ENCODE measurements at regions of chr4 and their contacts with region 1.

Region 1: DNA sequence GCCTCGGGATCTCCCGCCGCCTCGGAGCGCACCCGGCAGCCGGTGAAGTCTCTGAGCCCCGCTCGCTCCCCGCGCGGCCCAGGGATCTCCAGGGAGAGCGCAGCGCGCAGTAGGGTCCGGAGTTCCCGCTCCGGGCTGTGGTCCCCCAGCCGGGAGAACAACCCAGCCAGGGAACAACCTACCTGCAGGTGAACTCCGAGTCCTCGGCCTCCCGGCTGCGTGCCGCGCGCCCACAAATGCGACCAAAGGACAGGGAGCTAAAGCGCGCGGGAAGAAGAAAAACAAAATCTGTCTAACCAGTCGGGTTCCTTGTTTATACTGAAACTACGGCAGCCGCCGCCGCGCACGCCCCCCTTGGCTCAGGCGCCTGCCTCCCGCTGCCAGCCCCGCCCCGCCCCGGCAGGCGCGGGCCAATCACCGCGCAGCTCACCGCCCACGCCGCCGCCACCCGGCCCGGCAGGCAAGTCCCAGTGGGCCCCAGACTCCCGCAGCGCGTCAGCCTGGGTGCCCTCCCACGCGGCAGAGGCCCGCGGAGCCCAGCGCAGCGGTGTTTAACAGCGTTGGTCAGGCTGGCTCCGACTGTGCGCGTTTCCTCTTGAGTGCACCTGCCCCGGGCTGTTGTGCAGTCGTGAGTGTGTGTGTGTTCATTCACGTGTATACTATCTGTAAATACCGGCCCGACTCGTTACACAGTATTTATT is at the start of gene RASGEF1B:
- DNase-seq: peak; percentile 80
- H3K4me3 Mint-ChIP-seq: peak within 1 kb of the TSS; percentile 80
- H3K27ac Mint-ChIP-seq: peak within 1 kb of the TSS; percentile 73
- H3K4me1 Mint-ChIP-seq: peaks cover 27% of the 10 kb centered on the region
- H3K27me3 Mint-ChIP-seq: no peaks in the 10 kb centered on the region
- CTCF ChIP-seq: no peak
- total RNA-seq, gene RASGEF1B: 4.8 and 5.4 TPM in 2 replicates

Region 2: DNA sequence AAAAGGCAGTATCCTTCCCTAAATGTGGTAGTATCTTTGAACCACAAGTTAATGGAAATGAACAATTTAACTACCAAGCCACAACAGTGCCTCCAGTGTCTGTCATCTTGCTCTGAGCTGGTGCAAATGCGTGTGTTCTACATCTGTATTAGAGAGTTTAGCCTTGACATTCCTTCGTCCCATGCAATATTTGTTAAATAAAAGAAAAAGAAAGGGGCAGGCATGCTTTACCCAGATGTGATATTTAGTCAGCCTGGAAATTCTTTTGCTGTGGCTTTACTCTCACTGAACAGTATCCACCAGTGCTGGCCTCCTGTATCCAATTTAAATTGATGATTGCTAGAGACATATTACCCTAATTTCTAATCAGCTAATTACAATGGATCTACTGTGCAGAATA is 825.7 kb before region 1 on chr4:
- CTCF ChIA-PET with region 1: no interaction called
- POLR2A ChIA-PET with region 1: no interaction called
- intact Hi-C with region 1: no loop called
- DNase-seq: no peak
- H3K4me3 Mint-ChIP-seq: no peak overlapping the region
- H3K27ac Mint-ChIP-seq: no peak overlapping the region
- H3K4me1 Mint-ChIP-seq: no peaks in the 10 kb centered on the region
- H3K27me3 Mint-ChIP-seq: no peaks in the 10 kb centered on the region
- CTCF ChIP-seq: no peak

Region 3: DNA sequence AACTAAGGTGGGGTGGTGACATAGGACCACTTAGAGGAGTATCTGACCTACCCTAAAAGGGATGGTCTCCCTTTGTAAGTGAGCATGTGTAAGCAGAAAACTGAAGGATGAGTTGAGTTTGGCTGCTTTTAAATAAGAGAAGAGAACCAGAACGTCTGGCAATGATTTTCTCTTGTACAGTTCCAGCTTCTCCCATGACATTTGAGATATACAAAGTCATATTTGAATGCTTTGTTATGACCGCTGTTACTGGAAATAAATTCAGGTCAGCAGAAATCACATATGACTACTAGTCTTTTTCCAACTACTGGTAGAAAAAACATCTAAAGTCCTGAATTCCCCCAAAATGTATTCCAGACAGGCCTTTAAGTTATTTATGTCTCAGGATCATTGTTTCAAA is 754.5 kb before region 1 on chr4:
- CTCF ChIA-PET with region 1: no interaction called
- POLR2A ChIA-PET with region 1: no interaction called
- intact Hi-C with region 1: no loop called
- DNase-seq: no peak
- H3K4me3 Mint-ChIP-seq: no peak overlapping the region
- H3K27ac Mint-ChIP-seq: no peak overlapping the region
- H3K4me1 Mint-ChIP-seq: peaks cover 20% of the 10 kb centered on the region
- H3K27me3 Mint-ChIP-seq: no peaks in the 10 kb centered on the region
- CTCF ChIP-seq: no peak

Region 4: GRCh38 chr4:81351654-81352445 is 119.9 kb before region 1 on chr4:
- CTCF ChIA-PET with region 1: no interaction called
- POLR2A ChIA-PET with region 1: no interaction called
- intact Hi-C with region 1: no loop called
- DNase-seq: peak; percentile 81
- H3K4me3 Mint-ChIP-seq: no peak overlapping the region
- H3K27ac Mint-ChIP-seq: no peak overlapping the region
- H3K4me1 Mint-ChIP-seq: no peaks in the 10 kb centered on the region
- H3K27me3 Mint-ChIP-seq: no peaks in the 10 kb centered on the region
- CTCF ChIP-seq: peak; percentile 74

Region 5: DNA sequence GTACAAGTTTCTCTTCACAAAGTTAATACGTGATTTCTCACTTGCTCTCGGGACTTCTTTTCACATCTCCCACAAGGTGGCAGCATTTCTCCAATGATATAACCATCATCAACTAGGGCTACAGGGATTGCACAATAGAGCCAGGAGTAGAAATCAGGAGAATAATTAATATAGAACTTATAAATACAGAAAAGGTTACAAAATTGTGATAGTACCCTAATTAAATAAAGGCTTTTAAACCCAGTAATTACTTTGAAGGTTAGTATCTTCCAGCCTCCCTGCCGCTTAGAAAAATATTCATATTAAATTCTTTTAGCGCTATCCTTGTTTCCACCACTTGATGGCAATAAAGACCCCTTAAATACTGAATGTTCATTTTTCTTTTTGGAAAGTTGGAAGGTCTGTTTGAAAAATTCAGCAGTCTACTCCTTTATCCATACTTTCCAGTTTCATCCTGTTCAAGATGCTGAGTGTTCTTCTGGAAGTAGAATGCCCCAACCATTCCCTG is 65.8 kb before region 1 on chr4:
- CTCF ChIA-PET with region 1: interaction called, 29 read pairs
- POLR2A ChIA-PET with region 1: no interaction called
- intact Hi-C with region 1: loop called (anchors 1 kb)
- DNase-seq: peak; percentile 92
- H3K4me3 Mint-ChIP-seq: no peak overlapping the region
- H3K27ac Mint-ChIP-seq: no peak overlapping the region
- H3K4me1 Mint-ChIP-seq: peaks cover 11% of the 10 kb centered on the region
- H3K27me3 Mint-ChIP-seq: peaks cover 11% of the 10 kb centered on the region
- CTCF ChIP-seq: peak; percentile 68

Region 6: DNA sequence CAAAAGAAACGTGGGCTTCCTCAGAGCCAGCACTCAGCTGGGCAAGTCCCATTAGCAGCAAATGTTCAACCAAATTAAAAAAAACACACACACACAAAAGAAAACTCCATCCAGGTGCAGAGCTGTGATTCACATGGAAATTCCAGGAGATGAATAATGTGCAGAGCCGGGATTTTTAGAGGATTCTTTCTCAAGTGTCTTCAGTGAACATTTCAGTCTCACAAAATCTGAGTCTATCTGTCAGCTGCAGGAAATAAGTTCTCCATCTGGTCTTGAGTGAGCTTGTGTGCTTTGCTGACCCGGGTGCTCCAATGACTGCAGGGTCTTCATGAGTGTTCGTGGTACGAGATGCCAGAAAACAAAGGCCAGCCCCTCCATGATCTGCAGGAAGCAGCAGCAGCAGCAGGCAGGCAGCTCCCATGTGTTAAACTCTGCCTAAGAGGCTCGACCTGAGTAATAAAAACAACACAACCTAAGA is 44.4 kb before region 1 on chr4:
- CTCF ChIA-PET with region 1: interaction called, 12 read pairs
- POLR2A ChIA-PET with region 1: interaction called, 11 read pairs
- intact Hi-C with region 1: no loop called
- DNase-seq: peak; percentile 34
- H3K4me3 Mint-ChIP-seq: peak overlapping the region; percentile 35
- H3K27ac Mint-ChIP-seq: peak overlapping the region; percentile 94
- H3K4me1 Mint-ChIP-seq: peaks cover 25% of the 10 kb centered on the region
- H3K27me3 Mint-ChIP-seq: no peaks in the 10 kb centered on the region
- CTCF ChIP-seq: no peak

Region 7: GRCh38 chr4:81631958-81632441 is 160.3 kb after region 1 on chr4:
- CTCF ChIA-PET with region 1: interaction called, 5 read pairs
- POLR2A ChIA-PET with region 1: interaction called, 20 read pairs
- intact Hi-C with region 1: loop called (anchors 1 kb)
- DNase-seq: peak; percentile 93
- H3K4me3 Mint-ChIP-seq: peak overlapping the region; percentile 14
- H3K27ac Mint-ChIP-seq: peak overlapping the region; percentile 91
- H3K4me1 Mint-ChIP-seq: peaks cover 20% of the 10 kb centered on the region
- H3K27me3 Mint-ChIP-seq: no peaks in the 10 kb centered on the region
- CTCF ChIP-seq: no peak

Region 8: DNA sequence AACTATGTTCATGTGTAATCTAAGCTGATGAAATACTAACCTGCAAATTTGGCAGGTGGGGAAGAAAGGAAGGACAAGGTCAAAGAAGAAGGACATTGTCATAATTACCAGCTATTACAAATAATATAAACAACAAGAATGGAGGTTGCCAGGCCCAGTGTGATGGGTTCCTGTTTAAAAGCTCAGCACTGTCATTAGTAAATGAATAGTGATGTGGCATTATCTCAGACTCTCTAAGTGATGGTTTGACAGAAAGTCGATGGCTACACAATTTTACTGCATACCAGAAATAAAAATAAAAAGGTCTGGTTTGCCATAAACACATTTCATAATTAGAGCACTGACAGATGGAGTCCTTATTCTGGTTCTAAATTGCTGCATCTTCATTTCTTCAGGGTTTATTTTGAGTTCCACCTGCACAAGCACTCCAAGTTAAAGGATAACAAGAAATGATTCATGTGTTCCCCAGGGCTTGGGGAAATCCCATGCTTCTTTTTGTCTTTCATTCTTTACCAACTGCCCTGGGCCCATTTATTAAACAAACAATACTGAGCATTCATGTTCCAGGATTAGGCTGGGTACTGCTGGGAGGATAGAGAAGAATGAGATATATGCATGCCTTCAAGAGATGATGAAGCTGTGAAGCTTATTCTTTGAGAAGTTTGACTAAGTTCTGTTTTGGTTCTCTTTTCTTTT is 367.8 kb after region 1 on chr4:
- CTCF ChIA-PET with region 1: interaction called, 167 read pairs
- POLR2A ChIA-PET with region 1: interaction called, 11 read pairs
- intact Hi-C with region 1: loop called (anchors 1 kb)
- DNase-seq: peak; percentile 17
- H3K4me3 Mint-ChIP-seq: no peak overlapping the region
- H3K27ac Mint-ChIP-seq: no peak overlapping the region
- H3K4me1 Mint-ChIP-seq: peaks cover 5% of the 10 kb centered on the region
- H3K27me3 Mint-ChIP-seq: no peaks in the 10 kb centered on the region
- CTCF ChIP-seq: no peak

Region 9: DNA sequence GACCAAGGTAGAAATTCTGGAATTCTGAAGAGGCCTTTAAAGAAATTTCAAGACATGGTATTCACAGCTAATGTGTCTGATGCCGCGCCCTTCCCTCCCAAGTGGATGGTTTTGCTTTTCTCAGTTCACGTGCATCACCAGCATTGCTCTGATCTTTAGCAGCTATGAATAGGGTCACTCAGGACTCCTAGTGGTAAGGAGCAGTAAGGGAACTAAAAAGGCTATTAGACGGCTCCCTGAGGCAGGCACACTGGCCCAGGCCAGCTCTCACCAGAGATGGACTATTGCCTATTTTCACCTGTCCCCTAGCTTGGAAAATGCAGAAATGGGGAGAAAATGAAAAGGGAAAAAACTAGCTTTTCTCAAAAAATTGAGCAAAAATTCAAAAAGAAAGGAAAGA is 447.5 kb after region 1 on chr4:
- CTCF ChIA-PET with region 1: no interaction called
- POLR2A ChIA-PET with region 1: no interaction called
- intact Hi-C with region 1: loop called (anchors 1 kb)
- DNase-seq: peak; percentile 38
- H3K4me3 Mint-ChIP-seq: no peak overlapping the region
- H3K27ac Mint-ChIP-seq: no peak overlapping the region
- H3K4me1 Mint-ChIP-seq: no peaks in the 10 kb centered on the region
- H3K27me3 Mint-ChIP-seq: no peaks in the 10 kb centered on the region
- CTCF ChIP-seq: peak; percentile 26

Region 10: GRCh38 chr4:82268050-82268825 is 796.5 kb after region 1 on chr4:
- CTCF ChIA-PET with region 1: interaction called, 47 read pairs
- POLR2A ChIA-PET with region 1: interaction called, 3 read pairs
- intact Hi-C with region 1: loop called (anchors 1 kb)
- DNase-seq: peak; percentile 76
- H3K4me3 Mint-ChIP-seq: no peak overlapping the region
- H3K27ac Mint-ChIP-seq: no peak overlapping the region
- H3K4me1 Mint-ChIP-seq: no peaks in the 10 kb centered on the region
- H3K27me3 Mint-ChIP-seq: no peaks in the 10 kb centered on the region
- CTCF ChIP-seq: peak; percentile 77